H1 (cell line): ENCODE measurements at regions of chr3 and their contacts with region 1.

Region 1: DNA sequence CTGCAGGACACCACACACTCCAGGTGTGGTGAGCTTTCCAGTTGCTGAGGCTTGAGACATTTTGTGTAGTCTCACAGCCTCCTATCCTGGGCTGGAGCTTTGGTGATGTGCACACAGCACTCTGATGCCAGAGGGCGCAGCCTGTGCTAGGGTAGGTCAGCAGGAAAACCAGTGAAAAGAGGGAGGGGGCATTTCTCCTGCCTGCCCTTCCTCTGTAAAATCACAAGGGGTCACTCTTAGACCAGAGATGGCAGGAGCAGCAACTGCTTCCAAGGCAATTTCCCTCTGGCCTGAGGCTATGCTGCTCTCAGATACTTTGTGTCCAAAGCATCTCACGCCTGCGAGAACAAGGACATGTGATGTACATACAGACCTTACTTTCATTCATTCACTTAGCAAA is 16.5 kb upstream of the MUSTN1 start:
- DNase-seq: peak; percentile 53 to 58
- H3K4me3 ChIP-seq: no peak overlapping the region
- H3K27ac ChIP-seq: no peak overlapping the region
- H3K4me1 ChIP-seq: no peaks in the 10 kb centered on the region
- H3K27me3 ChIP-seq: no peaks in the 10 kb centered on the region
- CTCF ChIP-seq: peak; percentile 66 to 94 (median 92)
- EP300 ChIP-seq: no peak
- POLR2A ChIP-seq: no peak
- RAD21 ChIP-seq: peak; percentile 95 to 98

Region 2: GRCh38 chr3:52838561-52839267 is 12.6 kb before region 1 on chr3:
- CTCF ChIA-PET with region 1: interaction called, 46 read pairs
- POLR2A ChIA-PET with region 1: no interaction called
- DNase-seq: no peak
- H3K4me3 ChIP-seq: no peak overlapping the region
- H3K27ac ChIP-seq: no peak overlapping the region
- H3K4me1 ChIP-seq: peaks cover 0 to 5% (median 0%) of the 10 kb centered on the region in 4 experiments; a peak in 3 of 7 replicates
- H3K27me3 ChIP-seq: no peaks in the 10 kb centered on the region
- CTCF ChIP-seq: no peak
- EP300 ChIP-seq: no peak
- POLR2A ChIP-seq: no peak
- RAD21 ChIP-seq: no peak

Region 3: GRCh38 chr3:52880474-52880873 is 29.1 kb after region 1 on chr3:
- CTCF ChIA-PET with region 1: interaction called, 13 read pairs
- POLR2A ChIA-PET with region 1: no interaction called
- DNase-seq: no peak
- H3K4me3 ChIP-seq: no peak overlapping the region
- H3K27ac ChIP-seq: no peak overlapping the region
- H3K4me1 ChIP-seq: peaks cover 0 to 5% (median 2%) of the 10 kb centered on the region in 4 experiments; a peak in 3 of 7 replicates
- H3K27me3 ChIP-seq: no peaks in the 10 kb centered on the region
- CTCF ChIP-seq: no peak
- EP300 ChIP-seq: no peak
- POLR2A ChIP-seq: no peak
- RAD21 ChIP-seq: no peak

Region 4: DNA sequence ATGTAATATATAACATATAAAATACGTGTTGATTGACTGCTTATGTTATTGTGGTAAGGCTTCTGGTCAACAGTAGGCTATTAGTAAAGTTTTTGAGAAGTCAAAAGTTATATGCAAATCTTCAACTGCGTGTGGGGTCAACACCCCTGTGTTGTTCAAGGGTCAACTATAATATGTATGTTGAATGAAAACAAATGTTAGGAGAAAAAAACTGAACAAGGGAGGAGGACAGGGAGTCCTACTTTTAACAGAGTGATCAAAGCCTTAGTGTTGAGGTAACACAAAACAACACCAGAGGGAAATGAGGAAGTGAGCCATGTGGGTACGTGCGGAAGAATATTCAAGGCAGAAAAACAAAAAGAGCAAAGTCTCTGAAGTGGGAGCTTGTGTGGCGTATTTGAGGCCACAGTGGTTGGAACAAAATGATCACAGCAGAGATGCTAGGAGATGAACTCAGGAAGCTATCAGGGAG is 132.0 kb after region 1 on chr3:
- CTCF ChIA-PET with region 1: interaction called, 35 read pairs
- POLR2A ChIA-PET with region 1: interaction called, 3 read pairs
- DNase-seq: no peak
- H3K4me3 ChIP-seq: no peak overlapping the region
- H3K27ac ChIP-seq: no peak overlapping the region
- H3K4me1 ChIP-seq: peaks cover 0 to 2% (median 0%) of the 10 kb centered on the region in 4 experiments; a peak in 1 of 7 replicates
- H3K27me3 ChIP-seq: no peaks in the 10 kb centered on the region
- CTCF ChIP-seq: no peak
- EP300 ChIP-seq: no peak
- POLR2A ChIP-seq: no peak
- RAD21 ChIP-seq: no peak

Region 5: DNA sequence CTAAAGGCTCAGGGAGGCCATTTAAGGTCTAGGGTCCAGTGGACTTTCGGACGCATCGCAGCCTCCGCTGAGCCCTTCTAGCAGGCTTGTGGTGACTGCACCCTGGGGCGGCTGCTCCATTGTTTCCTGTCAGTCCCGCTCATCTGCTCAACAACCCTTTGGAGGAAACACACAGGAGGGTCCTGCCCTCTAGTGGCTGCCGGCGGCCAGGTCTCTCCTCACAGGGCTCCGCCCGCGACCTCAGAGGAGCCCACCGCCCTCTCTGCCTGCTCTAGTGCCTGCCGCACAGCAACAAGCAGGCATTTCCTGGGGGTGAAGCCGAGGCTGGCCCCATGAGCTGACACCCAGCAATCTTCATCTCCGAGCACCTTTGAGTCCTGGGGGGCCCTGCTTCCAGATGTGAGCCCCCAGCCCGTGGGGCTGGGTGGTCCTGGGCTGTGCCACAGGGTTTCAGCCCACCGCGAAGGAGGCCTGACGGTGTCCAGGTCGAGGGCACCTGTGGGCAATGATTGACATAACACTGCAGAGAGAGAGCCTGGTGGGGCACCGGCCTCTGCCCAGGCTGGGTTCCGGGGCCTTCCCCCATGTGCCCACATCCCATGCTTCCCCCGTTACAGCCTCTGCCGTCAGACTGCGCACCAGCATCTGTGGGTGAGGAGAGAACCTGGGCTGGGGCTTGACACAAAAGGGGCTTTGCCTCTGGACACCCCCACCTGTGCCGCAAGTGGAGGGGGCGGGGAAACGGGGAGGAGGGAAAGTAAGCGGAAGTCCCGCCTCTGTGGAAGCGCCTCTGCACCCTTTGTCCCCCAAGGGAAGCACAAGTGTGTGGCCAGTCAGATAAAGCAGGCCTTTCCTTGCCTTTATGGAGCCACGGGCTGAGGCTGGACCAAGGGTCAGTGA is 221.6 kb after region 1 on chr3:
- CTCF ChIA-PET with region 1: interaction called, 20 read pairs
- POLR2A ChIA-PET with region 1: no interaction called
- DNase-seq: peak; percentile 78 to 96
- H3K4me3 ChIP-seq: peak overlapping the region; percentile 21 to 57 (median 32)
- H3K27ac ChIP-seq: no peak overlapping the region
- H3K4me1 ChIP-seq: peaks cover 0 to 15% (median 9%) of the 10 kb centered on the region in 4 experiments; a peak in 6 of 7 replicates
- H3K27me3 ChIP-seq: no peaks in the 10 kb centered on the region; a peak in 2 of 7 replicates
- CTCF ChIP-seq: peak in 2 of 3 experiments; percentile 90 to 99; a peak in 3 of 4 replicates
- EP300 ChIP-seq: no peak
- POLR2A ChIP-seq: peak in 1 of 2 experiments; percentile 34; a peak in 1 of 3 replicates
- RAD21 ChIP-seq: peak; percentile 93 to 94